Vagina (tissue), 2 donors: ENCODE measurements at regions of chr19 and their contacts with region 1.

Region 1: GRCh38 chr19:34938886-34939285 is 12.2 kb downstream of the ZNF30 start:
- DNase-seq: no peak
- H3K4me3 ChIP-seq: no peak overlapping the region
- H3K27ac ChIP-seq: no peak overlapping the region
- H3K4me1 ChIP-seq: no peaks in the 10 kb centered on the region
- H3K27me3 ChIP-seq: no peaks in the 10 kb centered on the region
- CTCF ChIP-seq: no peak
- POLR2A ChIP-seq: no peak

Region 2: DNA sequence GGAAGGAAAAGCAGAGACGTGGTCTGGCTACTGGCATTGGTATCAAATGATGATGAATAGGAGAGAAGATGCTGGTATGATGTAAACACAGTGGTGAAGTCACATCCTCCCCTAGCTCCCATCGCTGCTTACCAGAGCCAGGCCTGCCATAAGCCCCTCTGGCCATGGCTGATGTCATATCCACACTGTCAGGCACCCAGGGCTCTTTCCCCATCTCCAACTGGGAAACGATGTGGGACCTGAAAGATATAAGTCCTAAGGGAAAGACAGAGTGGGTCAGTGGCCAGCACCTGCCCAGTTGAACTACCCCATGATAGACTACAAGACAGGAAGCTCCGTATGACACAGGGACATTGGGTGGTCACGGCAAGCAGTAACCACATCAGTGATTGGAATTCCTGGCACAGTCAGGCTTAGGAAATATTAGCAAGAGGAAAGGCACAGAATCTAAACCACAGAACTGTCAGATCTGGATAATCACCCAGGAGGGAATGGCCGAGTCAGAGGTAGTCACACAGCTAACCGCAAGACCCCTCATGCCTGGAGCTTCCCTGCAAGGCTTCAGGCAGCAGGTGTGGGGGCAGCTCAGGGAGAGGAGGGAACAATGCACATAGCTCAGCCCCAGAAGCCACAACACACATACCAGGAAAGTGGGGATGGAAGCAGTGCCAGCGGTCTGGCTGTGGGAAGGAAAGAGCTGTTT is 21.4 kb after region 1 on chr19:
- intact Hi-C with region 1: loop called (anchors 1 kb)
- DNase-seq: no peak
- H3K4me3 ChIP-seq: no peak overlapping the region
- H3K27ac ChIP-seq: no peak overlapping the region
- H3K4me1 ChIP-seq: peaks cover 24% of the 10 kb centered on the region
- H3K27me3 ChIP-seq: no peaks in the 10 kb centered on the region
- CTCF ChIP-seq: no peak
- POLR2A ChIP-seq: no peak

Region 3: GRCh38 chr19:35013031-35013819 is 74.3 kb after region 1 on chr19:
- intact Hi-C with region 1: no loop called
- DNase-seq: no peak
- H3K4me3 ChIP-seq: no peak overlapping the region
- H3K27ac ChIP-seq: peak overlapping the region; percentile 21
- H3K4me1 ChIP-seq: peaks cover 22% of the 10 kb centered on the region
- H3K27me3 ChIP-seq: no peaks in the 10 kb centered on the region
- CTCF ChIP-seq: peak; percentile 79 to 96 (median 91)
- POLR2A ChIP-seq: no peak